Uterus (tissue), 4 donors: ENCODE measurements at regions of chr11 and their contacts with region 1.

Region 1: DNA sequence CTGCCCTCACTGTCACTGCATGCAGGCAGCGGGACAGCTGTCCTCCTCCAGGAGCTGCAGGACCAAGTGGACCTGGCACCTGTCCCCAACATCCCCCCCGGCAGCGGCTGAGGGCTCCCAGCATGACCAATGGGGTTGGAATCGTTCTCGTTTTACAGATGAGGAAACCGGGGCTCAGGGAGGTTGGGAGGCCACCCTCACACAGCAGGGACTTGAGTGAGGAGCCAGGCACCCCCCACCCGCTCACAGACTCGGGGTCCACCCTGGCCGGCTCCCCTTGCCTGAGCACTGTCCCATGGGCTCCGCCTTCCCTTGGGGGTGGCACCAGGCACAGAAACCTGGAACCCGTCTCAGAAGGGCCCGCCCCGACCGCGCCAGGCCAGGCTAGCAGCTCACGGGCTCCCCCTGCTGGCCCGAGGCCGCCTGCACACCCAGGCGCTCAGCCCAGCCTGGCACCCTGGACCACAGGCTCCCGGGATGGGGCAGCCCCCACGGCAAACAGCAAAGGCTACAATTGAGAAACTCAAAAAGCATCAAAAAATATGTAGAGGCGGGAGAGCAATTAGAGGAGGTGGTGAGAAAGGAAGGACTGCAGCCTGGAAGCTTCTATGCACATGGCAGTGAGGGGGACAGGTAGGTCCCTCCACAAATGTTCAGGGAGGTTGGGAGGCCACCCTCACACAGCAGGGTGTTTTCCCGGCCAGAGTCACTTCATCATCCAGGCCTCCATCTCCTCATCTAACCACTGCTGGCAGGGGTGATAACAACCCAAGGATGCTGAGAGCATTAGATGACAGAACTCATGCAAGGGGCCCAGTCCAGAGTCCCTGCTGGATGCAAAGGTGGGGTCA is 12.8 kb downstream of the MACROD1 start:
- DNase-seq: peak; percentile 50 to 69
- H3K4me3 ChIP-seq: no peak overlapping the region
- H3K27ac ChIP-seq: no peak overlapping the region
- H3K4me1 ChIP-seq: no peaks in the 10 kb centered on the region
- H3K27me3 ChIP-seq: no peaks in the 10 kb centered on the region
- CTCF ChIP-seq: peak; percentile 96 to 99 (median 98)
- POLR2A ChIP-seq: peak in 1 of 2 donors; percentile 18

Region 2: DNA sequence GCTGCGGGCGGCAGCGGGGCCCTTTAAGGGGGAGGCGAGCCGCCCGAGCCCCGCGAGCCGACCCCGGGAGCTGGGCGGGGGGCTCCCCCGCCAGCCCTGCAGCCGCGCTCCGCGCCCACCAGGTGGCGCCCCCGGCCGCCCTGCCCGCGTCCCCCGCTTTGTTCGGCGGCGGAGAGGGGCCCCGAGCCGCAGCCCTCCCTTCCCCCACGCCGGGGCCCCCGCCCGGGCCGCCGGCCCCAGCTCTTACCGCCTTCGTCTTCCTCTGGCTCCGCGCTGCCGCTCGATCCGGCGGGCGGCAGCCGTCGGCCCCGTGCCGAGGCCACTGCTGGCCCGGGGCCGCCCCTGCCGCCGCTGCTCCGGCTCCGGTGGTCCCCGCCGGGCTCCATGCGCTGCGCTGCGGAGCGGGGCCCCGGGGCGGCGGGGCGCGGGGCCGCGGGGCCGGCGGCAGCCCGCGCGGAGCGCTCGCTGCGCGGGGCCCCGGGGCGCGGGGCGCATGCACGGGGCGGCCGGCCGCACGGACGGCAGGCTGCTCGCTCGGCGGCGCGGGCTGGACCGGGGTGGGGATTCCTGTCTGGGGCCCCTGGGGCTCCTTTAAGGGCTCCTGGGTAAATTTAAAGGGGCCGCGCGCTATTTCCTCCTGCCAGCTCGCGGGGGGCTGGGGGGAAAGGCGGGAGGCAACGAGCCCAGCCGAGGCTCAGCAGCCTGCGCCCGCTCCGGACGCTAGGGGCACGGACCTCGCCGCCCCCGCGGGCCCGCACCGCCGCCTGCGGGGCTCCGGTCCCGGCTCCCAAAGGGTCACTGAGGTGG is 384.6 kb before region 1 on chr11 and contains the start of gene ZFTA:
- intact Hi-C with region 1: loop called (anchors 10 kb)
- DNase-seq: peak; percentile 72 to 75
- H3K4me3 ChIP-seq: peak within 1 kb of the TSS; percentile 80 to 97
- H3K27ac ChIP-seq: peak within 1 kb of the TSS; percentile 96
- H3K4me1 ChIP-seq: peaks cover 0 to 11% of the 10 kb centered on the region in 2 donors
- H3K27me3 ChIP-seq: no peaks in the 10 kb centered on the region
- CTCF ChIP-seq: peak; percentile 17 to 94 (median 91)
- POLR2A ChIP-seq: peak in 1 of 2 donors; percentile 5
- total RNA-seq, gene ZFTA: 19.7 to 61.5 (median 48.4) TPM

Region 3: DNA sequence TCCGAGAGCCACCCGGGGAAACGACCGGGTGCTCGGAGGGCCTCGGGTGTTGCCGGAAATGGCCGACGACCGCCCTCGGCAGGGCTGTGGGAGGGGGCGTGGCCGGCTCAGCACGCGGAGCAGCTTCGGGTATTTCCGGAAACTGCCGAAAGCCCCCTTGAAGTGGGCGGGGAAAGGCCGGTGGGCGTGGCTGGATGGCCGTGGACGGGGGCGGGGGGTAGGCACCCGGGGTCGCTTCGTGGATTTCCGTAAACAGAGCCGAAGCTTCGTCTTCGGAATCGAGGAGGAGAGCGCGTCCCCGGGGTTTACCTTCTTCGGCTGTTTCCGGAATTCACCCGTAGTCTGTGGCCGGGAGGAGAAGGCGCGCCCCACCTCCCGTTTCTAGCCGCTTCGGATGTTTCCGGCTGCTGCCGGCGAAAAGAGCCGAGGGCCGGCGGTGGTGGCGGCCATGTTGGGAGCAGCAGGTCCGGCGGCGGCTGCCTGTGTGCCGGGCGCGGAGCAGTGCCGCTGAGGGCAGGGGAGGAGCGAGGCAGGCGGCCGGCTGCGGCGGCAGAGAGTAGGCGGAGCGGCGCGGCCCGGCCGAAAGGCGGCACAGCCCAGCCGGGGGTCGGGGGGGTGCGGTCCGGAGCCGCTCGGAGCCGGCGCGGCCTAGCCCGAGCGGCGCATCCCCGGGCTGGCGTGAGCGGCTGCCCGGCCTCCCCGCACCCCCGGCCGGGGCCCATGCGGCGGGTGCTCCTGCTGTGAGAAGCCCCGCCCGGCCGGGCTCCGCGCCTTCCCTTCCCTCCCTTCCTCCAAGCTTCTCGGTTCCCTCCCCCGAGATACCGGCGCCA is 314.2 kb before region 1 on chr11 and contains the start of gene MARK2:
- intact Hi-C with region 1: loop called (anchors 10 kb)
- DNase-seq: peak; percentile 98 to 99
- H3K4me3 ChIP-seq: peak within 1 kb of the TSS; percentile 79 to 97
- H3K27ac ChIP-seq: peak within 1 kb of the TSS; percentile 90 to 94
- H3K4me1 ChIP-seq: peaks cover 0 to 8% of the 10 kb centered on the region in 2 donors
- H3K27me3 ChIP-seq: no peaks in the 10 kb centered on the region
- CTCF ChIP-seq: peak in 2 of 4 experiments; percentile 19 to 39
- POLR2A ChIP-seq: peak; percentile 65 to 82
- total RNA-seq, gene MARK2: 6.9 to 36.5 (median 17.7) TPM

Region 4: GRCh38 chr11:64000026-64000739 is 152.9 kb before region 1 on chr11:
- intact Hi-C with region 1: loop called (anchors 5 kb)
- DNase-seq: peak; percentile 55 to 74
- H3K4me3 ChIP-seq: peak overlapping the region; percentile 1 to 34
- H3K27ac ChIP-seq: peak overlapping the region in 1 of 2 donors; percentile 19
- H3K4me1 ChIP-seq: peaks cover 0 to 19% of the 10 kb centered on the region in 2 donors
- H3K27me3 ChIP-seq: no peaks in the 10 kb centered on the region
- CTCF ChIP-seq: peak; percentile 71 to 98 (median 90)
- POLR2A ChIP-seq: peak in 1 of 2 donors; percentile 24